ENCODE measurements at regions of chr18 and their contacts with region 1.

Region 1: GRCh38 chr18:23586249-23587196 is at the start of gene NPC1:
- DNase-seq: peak; percentile 93
- ATAC-seq: peak; percentile 87
- H3K4me3 ChIP-seq: peak within 1 kb of the TSS; percentile 79 to 99 (median 97)
- H3K4me3 Mint-ChIP-seq: peak within 1 kb of the TSS; percentile 93
- H3K27ac ChIP-seq: peak within 1 kb of the TSS; percentile 99
- H3K27ac Mint-ChIP-seq: peak within 1 kb of the TSS; percentile 97
- H3K4me1 ChIP-seq: peaks cover 13 to 21% of the 10 kb centered on the region in 2 donors
- H3K4me1 Mint-ChIP-seq: peaks cover 23% of the 10 kb centered on the region
- H3K27me3 ChIP-seq: no peaks in the 10 kb centered on the region
- H3K27me3 Mint-ChIP-seq: no peaks in the 10 kb centered on the region
- CTCF ChIP-seq: peak; percentile 95
- total RNA-seq, gene NPC1: 44.4 and 48.5 TPM in 2 replicates

Region 2: GRCh38 chr18:23131693-23132319 is 454.7 kb before region 1 on chr18:
- CTCF ChIA-PET with region 1: no interaction called
- POLR2A ChIA-PET with region 1: no interaction called
- intact Hi-C with region 1: loop called (anchors 5 kb)
- DNase-seq: peak; percentile 85
- ATAC-seq: no peak
- H3K4me3 ChIP-seq: no peak overlapping the region
- H3K4me3 Mint-ChIP-seq: no peak overlapping the region
- H3K27ac ChIP-seq: no peak overlapping the region
- H3K27ac Mint-ChIP-seq: no peak overlapping the region
- H3K4me1 ChIP-seq: peaks cover 24 to 28% of the 10 kb centered on the region in 2 donors
- H3K4me1 Mint-ChIP-seq: peaks cover 21% of the 10 kb centered on the region
- H3K27me3 ChIP-seq: peaks cover 0 to 33% (median 16%) of the 10 kb centered on the region in 4 experiments
- H3K27me3 Mint-ChIP-seq: peaks cover 16% of the 10 kb centered on the region
- CTCF ChIP-seq: peak; percentile 95

Region 3: GRCh38 chr18:23437357-23438045 is 149.0 kb before region 1 on chr18:
- CTCF ChIA-PET with region 1: no interaction called
- POLR2A ChIA-PET with region 1: no interaction called
- intact Hi-C with region 1: loop called (anchors 5 kb)
- DNase-seq: peak; percentile 80
- ATAC-seq: peak; percentile 100
- H3K4me3 ChIP-seq: peak overlapping the region; percentile 75 to 95 (median 92)
- H3K4me3 Mint-ChIP-seq: peak overlapping the region; percentile 92
- H3K27ac ChIP-seq: peak overlapping the region; percentile 16 to 70
- H3K27ac Mint-ChIP-seq: peak overlapping the region; percentile 67
- H3K4me1 ChIP-seq: peaks cover 11 to 20% of the 10 kb centered on the region in 2 donors
- H3K4me1 Mint-ChIP-seq: peaks cover 16% of the 10 kb centered on the region
- H3K27me3 ChIP-seq: no peaks in the 10 kb centered on the region
- H3K27me3 Mint-ChIP-seq: no peaks in the 10 kb centered on the region
- CTCF ChIP-seq: no peak

Region 4: GRCh38 chr18:23515911-23516546 is 70.5 kb before region 1 on chr18:
- CTCF ChIA-PET with region 1: interaction called, 56 read pairs
- POLR2A ChIA-PET with region 1: no interaction called
- intact Hi-C with region 1: loop called (anchors 1 kb)
- DNase-seq: peak; percentile 82
- ATAC-seq: peak; percentile 97
- H3K4me3 ChIP-seq: no peak overlapping the region
- H3K4me3 Mint-ChIP-seq: no peak overlapping the region
- H3K27ac ChIP-seq: peak overlapping the region in 1 of 2 donors; percentile 57
- H3K27ac Mint-ChIP-seq: peak overlapping the region; percentile 46
- H3K4me1 ChIP-seq: peaks cover 9 to 12% of the 10 kb centered on the region in 2 donors
- H3K4me1 Mint-ChIP-seq: peaks cover 22% of the 10 kb centered on the region
- H3K27me3 ChIP-seq: no peaks in the 10 kb centered on the region
- H3K27me3 Mint-ChIP-seq: no peaks in the 10 kb centered on the region
- CTCF ChIP-seq: peak; percentile 92